ENCODE measurements at regions of chr2 and their contacts with region 1.

Region 1: GRCh38 chr2:74138600-74139323 is 8.9 kb downstream of the BOLA3 start:
- DNase-seq: no peak
- H3K4me3 ChIP-seq: no peak overlapping the region
- H3K27ac ChIP-seq: no peak overlapping the region
- H3K4me1 ChIP-seq: no peaks in the 10 kb centered on the region
- H3K27me3 ChIP-seq: no peaks in the 10 kb centered on the region
- CTCF ChIP-seq: no peak
- POLR2A ChIP-seq: no peak

Region 2: GRCh38 chr2:72554381-72554780 is 1584.4 kb before region 1 on chr2:
- intact Hi-C with region 1: loop called (anchors 10 kb)
- DNase-seq: no peak
- H3K4me3 ChIP-seq: no peak overlapping the region
- H3K27ac ChIP-seq: no peak overlapping the region
- H3K4me1 ChIP-seq: no peaks in the 10 kb centered on the region
- H3K27me3 ChIP-seq: no peaks in the 10 kb centered on the region
- CTCF ChIP-seq: no peak
- POLR2A ChIP-seq: no peak

Region 3: DNA sequence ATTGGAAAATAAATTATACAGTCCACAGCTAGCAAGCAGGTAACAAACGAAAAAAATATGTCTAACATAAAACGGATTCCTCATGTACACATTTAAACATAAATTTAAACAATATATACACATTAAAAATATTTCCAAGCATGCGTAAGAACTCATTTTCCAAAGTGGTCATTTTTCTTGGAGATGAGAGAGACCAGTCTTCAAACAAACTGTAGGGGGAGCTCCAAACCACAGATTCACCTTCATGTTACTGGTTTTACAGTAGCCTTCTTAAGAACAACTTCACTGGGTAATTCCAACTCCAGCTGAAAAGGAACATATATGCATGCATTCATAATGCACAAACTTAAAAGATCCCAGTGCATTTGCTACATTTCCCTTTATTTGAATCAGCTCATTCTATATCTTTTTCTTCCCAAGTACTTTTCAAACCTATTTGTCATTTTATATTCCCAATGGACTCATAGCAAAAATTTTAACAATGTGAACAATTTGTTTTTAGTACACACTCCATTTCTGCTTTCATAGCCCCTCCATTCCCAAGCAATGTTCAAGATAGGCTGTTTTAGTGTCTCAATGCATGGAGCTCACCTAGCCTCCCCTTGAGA is 314.7 kb before region 1 on chr2:
- intact Hi-C with region 1: no loop called
- DNase-seq: no peak
- H3K4me3 ChIP-seq: no peak overlapping the region
- H3K27ac ChIP-seq: no peak overlapping the region
- H3K4me1 ChIP-seq: no peaks in the 10 kb centered on the region
- H3K27me3 ChIP-seq: no peaks in the 10 kb centered on the region
- CTCF ChIP-seq: peak; percentile 53 to 85 (median 74)
- POLR2A ChIP-seq: no peak

Region 4: DNA sequence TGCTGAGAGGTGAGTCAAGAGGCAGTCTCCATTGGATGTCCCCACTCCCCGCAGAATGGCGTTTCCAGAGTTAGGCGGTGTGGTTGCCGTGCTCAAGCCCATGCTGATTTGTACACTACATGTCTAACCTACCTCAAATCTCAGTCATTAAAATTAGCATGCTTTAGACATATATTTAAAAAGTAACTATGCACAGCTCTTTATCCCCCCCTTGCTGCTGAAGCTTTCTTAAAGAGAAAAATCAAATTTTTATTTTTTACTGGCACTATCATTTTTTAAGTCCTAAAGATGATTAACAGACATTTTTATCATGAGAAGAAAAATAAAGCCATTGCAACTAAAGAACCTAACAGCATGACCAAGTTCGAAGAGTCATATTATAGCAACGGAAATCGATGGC is 33.9 kb before region 1 on chr2:
- intact Hi-C with region 1: no loop called
- DNase-seq: no peak
- H3K4me3 ChIP-seq: no peak overlapping the region
- H3K27ac ChIP-seq: no peak overlapping the region
- H3K4me1 ChIP-seq: no peaks in the 10 kb centered on the region
- H3K27me3 ChIP-seq: no peaks in the 10 kb centered on the region
- CTCF ChIP-seq: no peak
- POLR2A ChIP-seq: no peak

Region 5: DNA sequence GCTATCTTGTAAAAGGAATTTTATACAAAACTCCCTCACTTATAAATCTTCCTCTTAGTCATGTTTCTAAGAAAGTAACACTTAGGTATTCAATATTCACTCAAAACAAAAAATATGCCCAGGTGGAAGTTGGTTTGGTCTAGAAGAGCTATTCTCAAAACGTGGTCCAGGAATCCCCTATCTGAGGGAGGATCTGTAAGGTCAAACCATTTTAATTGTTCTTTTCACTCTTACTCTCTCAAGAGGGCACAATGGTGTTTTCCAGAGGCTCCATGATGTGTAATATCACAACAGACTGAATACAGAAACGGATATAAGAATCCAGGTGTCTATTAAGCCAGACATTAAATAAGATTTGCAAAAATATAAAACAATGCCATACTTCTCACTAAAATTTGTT is 30.0 kb after region 1 on chr2:
- intact Hi-C with region 1: no loop called
- DNase-seq: no peak
- H3K4me3 ChIP-seq: no peak overlapping the region
- H3K27ac ChIP-seq: no peak overlapping the region
- H3K4me1 ChIP-seq: no peaks in the 10 kb centered on the region
- H3K27me3 ChIP-seq: no peaks in the 10 kb centered on the region
- CTCF ChIP-seq: no peak
- POLR2A ChIP-seq: no peak

Region 6: DNA sequence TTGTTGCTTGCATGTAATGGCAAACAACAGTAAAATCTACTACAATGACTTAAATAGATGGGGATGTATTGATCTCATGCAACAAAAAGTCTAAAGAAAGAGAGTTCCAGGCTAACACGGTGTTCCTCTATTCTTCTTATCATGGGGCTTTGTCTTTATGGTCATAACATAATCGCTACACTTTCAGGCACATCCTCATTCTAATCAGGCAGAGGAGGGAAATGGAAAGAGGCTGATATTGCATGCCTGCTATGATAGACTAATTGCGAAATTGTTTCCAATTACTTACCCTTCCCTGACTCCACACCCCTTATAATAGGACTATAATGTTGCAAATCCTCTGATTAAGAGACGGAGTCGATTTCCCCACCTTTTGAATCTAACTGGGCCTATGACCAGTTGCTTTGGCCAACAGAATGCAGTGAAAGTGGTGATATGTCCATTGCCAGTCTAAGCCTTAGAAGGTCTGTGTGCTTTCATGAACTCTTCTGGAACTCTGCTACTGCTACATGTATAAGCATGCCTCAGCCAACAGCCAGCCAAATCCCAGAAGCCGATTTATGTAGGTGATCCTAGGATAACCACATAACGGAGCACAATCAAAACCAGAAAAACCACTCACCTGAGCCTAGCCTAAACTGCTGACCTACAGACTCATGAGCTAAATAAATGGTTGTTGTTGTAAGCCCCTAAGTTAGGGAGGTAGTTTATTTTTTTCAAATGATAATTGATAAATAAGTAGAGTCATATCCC is 1240.9 kb after region 1 on chr2:
- intact Hi-C with region 1: no loop called
- DNase-seq: no peak
- H3K4me3 ChIP-seq: no peak overlapping the region
- H3K27ac ChIP-seq: no peak overlapping the region
- H3K4me1 ChIP-seq: no peaks in the 10 kb centered on the region
- H3K27me3 ChIP-seq: no peaks in the 10 kb centered on the region
- CTCF ChIP-seq: no peak
- POLR2A ChIP-seq: no peak